Right lobe of liver (tissue), 6 donors: ENCODE measurements at regions of chr10 and their contacts with region 1.

Region 1: GRCh38 chr10:101974091-101974971 is 81.6 kb downstream of the ARMH3 start:
- DNase-seq: no peak
- ATAC-seq: peak; percentile 12 to 63 (median 54)
- H3K4me3 ChIP-seq: no peak overlapping the region
- H3K27ac ChIP-seq: peak overlapping the region in 2 of 3 donors; percentile 4 to 41
- H3K4me1 ChIP-seq: no peaks in the 10 kb centered on the region
- H3K27me3 ChIP-seq: no peaks in the 10 kb centered on the region
- CTCF ChIP-seq: no peak
- POLR2A ChIP-seq: no peak

Region 2: GRCh38 chr10:101558202-101558601 is 416.1 kb before region 1 on chr10:
- intact Hi-C with region 1: no loop called
- DNase-seq: no peak
- ATAC-seq: no peak
- H3K4me3 ChIP-seq: no peak overlapping the region
- H3K27ac ChIP-seq: no peak overlapping the region
- H3K4me1 ChIP-seq: no peaks in the 10 kb centered on the region
- H3K27me3 ChIP-seq: no peaks in the 10 kb centered on the region
- CTCF ChIP-seq: no peak
- POLR2A ChIP-seq: no peak

Region 3: DNA sequence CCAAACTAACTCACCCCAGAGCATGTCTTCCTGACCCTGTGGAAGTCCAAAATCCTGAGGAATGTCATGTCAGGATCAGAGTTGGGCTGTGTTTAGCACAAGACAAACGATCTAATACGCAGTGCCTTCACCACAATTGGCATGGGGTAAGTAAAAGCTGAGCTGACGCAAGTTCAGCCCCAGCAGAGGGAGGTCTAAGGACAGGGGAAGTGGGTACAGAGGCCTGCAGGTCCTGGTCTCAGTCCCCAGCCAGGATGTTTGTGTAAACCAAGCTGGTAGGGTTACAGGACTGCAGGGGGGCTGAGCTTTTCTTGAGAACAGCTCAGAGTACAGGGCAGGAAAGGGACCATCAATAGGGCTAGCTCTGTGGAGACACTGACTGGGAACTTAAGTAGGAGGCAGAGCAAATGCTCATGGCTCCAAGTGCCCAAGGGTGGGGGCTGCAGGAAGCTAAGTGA is 125.4 kb before region 1 on chr10:
- intact Hi-C with region 1: loop called in 1 of 2 experiments (anchors 5 kb)
- DNase-seq: no peak
- ATAC-seq: peak in 3 of 4 donors; percentile 43 to 54 (median 49)
- H3K4me3 ChIP-seq: no peak overlapping the region
- H3K27ac ChIP-seq: no peak overlapping the region
- H3K4me1 ChIP-seq: no peaks in the 10 kb centered on the region
- H3K27me3 ChIP-seq: no peaks in the 10 kb centered on the region
- CTCF ChIP-seq: no peak
- POLR2A ChIP-seq: no peak